IMR-90 (cell line): ENCODE measurements at regions of chr6 and their contacts with region 1.

Region 1: GRCh38 chr6:37757381-37757780 is 59.7 kb upstream of the MDGA1 start:
- DNase-seq: no peak
- ATAC-seq: no peak
- H3K4me3 ChIP-seq: no peak overlapping the region
- H3K27ac ChIP-seq: no peak overlapping the region
- H3K4me1 ChIP-seq: no peaks in the 10 kb centered on the region
- H3K27me3 ChIP-seq: peaks cover 31% of the 10 kb centered on the region
- CTCF ChIP-seq: no peak
- POLR2A ChIP-seq: no peak
- RAD21 ChIP-seq: no peak

Region 2: DNA sequence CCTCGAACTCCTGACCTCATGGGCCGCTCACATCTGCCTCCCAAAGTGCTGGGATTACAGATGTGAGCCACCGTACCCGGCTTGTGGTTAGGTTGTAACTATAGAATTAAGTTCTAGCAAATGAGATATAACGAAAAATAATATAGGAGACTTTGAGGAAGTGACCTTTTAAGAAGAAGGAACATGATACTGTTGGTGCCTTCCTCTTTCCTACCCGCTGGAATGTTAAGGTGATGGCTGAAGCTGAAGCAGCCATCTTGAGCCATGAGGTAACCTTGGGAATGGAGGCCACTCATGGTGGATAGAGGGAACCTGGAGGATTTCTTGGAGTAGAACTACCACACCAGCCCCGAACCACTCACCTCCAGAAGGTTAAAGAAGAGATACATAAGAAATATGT is 11.6 kb before region 1 on chr6:
- CTCF ChIA-PET with region 1: no interaction called
- POLR2A ChIA-PET with region 1: no interaction called
- dilution Hi-C with region 1: no loop called
- in situ Hi-C with region 1: no loop called
- intact Hi-C with region 1: loop called (anchors 1 kb)
- DNase-seq: no peak
- ATAC-seq: no peak
- H3K4me3 ChIP-seq: no peak overlapping the region
- H3K27ac ChIP-seq: no peak overlapping the region
- H3K4me1 ChIP-seq: no peaks in the 10 kb centered on the region
- H3K27me3 ChIP-seq: peaks cover 36% of the 10 kb centered on the region
- CTCF ChIP-seq: no peak
- POLR2A ChIP-seq: no peak
- RAD21 ChIP-seq: no peak